Activated T-helper 2 cell treated with anti-CD3 and anti-CD28 coated beads, Interferon-gamma antibody, Interleukin-2, Interleukin-4, amounts not matched to agents 10 μg/mL and 5 μg/mL and 100 μg/mL, durations not matched to agents 14 hours and 24 hours and 36 hours (primary cell): ENCODE measurements at regions of chr5 and their contacts with region 1.

Region 1: DNA sequence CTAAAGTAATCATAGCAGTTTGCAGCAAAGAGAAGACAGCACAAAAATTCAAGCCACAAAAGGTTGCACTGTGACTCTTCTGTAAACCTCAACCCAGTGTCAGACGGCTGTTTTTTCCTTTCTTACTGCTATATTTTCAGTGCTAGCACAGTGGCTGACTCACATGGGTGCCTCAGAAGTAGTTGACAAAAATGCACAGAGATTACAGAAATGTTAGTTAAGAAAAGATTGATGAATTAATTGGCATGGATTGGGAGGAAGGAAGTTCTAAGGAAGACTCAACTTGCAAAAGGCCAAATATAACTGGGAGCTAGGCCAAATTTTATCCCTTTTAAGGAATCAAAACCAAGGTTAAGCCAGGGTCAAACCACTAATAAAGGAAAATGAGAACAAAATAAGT is 43.7 kb upstream of the ITGA1 start:
- DNase-seq: peak; percentile 54
- H3K4me3 Mint-ChIP-seq: peak overlapping the region; percentile 3
- H3K27ac Mint-ChIP-seq: peak overlapping the region; percentile 51
- H3K4me1 Mint-ChIP-seq: peaks cover 59% of the 10 kb centered on the region
- H3K27me3 Mint-ChIP-seq: no peaks in the 10 kb centered on the region

Region 2: DNA sequence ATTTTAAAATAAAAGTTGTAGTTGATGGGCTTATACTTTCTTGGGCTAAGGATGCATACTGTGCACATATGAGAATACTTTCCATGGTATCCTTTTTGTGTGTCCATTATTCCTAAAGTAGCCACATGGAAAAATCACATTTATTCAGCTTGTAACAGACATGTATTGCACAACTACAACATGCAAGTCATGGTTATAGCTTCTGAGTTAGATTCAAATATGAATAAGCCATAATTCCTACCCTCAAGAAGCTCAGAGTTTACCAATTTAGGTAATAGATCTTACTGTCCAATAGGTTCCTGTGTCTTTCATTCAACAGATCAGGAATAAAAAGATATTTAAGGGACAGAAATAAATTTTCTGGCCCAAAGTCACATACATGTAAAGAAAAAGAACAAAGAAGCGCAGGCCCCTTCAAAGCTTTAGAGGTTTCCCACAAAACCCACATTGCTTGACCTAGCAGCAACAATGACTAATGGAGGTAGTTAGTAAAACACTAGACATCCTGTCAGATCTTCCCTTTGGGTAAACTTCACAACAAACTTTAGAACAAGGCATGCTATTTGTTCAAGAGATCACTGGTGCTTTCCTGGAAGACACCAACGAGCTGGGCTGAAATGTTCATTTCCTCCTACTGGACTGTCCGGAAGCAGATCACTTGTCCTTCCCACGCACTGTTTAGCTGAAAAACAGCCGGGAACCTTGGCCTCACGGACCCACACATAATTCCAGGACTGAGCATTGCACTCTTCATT is 34.6 kb before region 1 on chr5:
- intact Hi-C with region 1: loop called (anchors 1 kb)
- DNase-seq: no peak
- H3K4me3 Mint-ChIP-seq: no peak overlapping the region
- H3K27ac Mint-ChIP-seq: peak overlapping the region; percentile 23
- H3K4me1 Mint-ChIP-seq: peaks cover 53% of the 10 kb centered on the region
- H3K27me3 Mint-ChIP-seq: peaks cover 4% of the 10 kb centered on the region

Region 3: DNA sequence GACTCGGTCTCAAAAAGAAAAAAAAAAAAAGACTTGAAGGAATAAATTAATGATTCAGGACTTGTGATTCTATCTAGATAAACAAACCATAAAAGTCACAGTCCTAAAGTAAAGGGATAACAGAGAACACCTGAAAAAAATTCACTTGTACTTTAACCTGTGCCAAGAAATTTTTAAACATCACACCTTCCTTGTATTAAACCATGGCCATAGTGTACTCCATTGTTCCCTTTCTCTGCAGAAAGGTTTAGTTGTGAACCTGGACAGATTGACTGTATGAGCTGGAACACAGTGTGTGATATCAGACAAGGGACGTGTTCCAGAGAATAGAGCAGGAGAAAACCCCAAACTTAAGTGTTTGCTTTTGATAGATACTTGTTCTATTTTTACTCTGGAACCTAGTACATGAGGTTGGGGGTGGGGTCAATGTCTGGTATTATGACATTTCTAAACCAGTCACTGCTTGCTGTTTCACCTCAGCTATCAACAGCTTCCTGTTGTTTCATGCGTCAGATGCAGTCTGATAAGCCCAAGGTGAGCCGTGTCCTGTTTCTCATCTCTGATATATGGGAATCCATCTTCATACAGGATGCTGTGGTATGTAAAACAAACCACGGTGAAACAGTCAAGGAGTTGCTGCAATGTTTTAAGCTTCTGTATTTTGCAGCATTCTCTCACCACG is 18.8 kb before region 1 on chr5:
- intact Hi-C with region 1: loop called (anchors 1 kb)
- DNase-seq: peak; percentile 73
- H3K4me3 Mint-ChIP-seq: peak overlapping the region; percentile 22
- H3K27ac Mint-ChIP-seq: peak overlapping the region; percentile 40
- H3K4me1 Mint-ChIP-seq: peaks cover 61% of the 10 kb centered on the region
- H3K27me3 Mint-ChIP-seq: no peaks in the 10 kb centered on the region

Region 4: GRCh38 chr5:52760695-52761366 is 16.9 kb after region 1 on chr5:
- intact Hi-C with region 1: loop called (anchors 1 kb)
- DNase-seq: no peak
- H3K4me3 Mint-ChIP-seq: no peak overlapping the region
- H3K27ac Mint-ChIP-seq: no peak overlapping the region
- H3K4me1 Mint-ChIP-seq: peaks cover 9% of the 10 kb centered on the region
- H3K27me3 Mint-ChIP-seq: no peaks in the 10 kb centered on the region

Region 5: GRCh38 chr5:52771343-52772039 is 27.5 kb after region 1 on chr5:
- intact Hi-C with region 1: loop called (anchors 1 kb)
- DNase-seq: peak; percentile 19
- H3K4me3 Mint-ChIP-seq: peak overlapping the region; percentile 14
- H3K27ac Mint-ChIP-seq: peak overlapping the region; percentile 47
- H3K4me1 Mint-ChIP-seq: peaks cover 66% of the 10 kb centered on the region
- H3K27me3 Mint-ChIP-seq: peaks cover 5% of the 10 kb centered on the region

Region 6: DNA sequence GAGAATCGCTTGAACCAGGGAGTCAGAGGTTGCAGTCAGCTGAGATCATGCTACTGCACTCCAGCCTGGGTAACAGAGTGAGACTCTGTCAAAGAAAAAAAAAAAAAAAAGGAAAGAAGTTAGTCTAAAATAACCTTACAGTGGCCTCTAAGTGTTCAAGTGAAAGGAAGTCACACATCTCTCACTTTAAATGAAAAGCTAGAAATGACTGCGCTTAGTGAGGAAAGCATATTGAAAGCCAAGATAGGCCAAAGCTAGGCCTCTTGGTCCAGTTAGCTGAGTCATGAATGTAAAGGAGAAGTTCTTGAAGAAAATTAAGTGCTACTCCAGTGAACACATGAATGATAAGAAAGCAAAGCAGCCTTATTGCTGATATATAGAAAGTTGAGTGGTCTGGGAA is 81.9 kb after region 1 on chr5:
- intact Hi-C with region 1: no loop called
- DNase-seq: no peak
- H3K4me3 Mint-ChIP-seq: no peak overlapping the region
- H3K27ac Mint-ChIP-seq: no peak overlapping the region
- H3K4me1 Mint-ChIP-seq: peaks cover 9% of the 10 kb centered on the region
- H3K27me3 Mint-ChIP-seq: no peaks in the 10 kb centered on the region